ENCODE measurements at regions of chr3 and their contacts with region 1.

Region 1: GRCh38 chr3:18369551-18370185 is 55.5 kb downstream of the SATB1 start:
- DNase-seq: no peak
- ATAC-seq: no peak
- H3K4me3 ChIP-seq: no peak overlapping the region
- H3K4me3 Mint-ChIP-seq: peak overlapping the region; percentile 63
- H3K27ac ChIP-seq: no peak overlapping the region
- H3K27ac Mint-ChIP-seq: peak overlapping the region; percentile 93
- H3K4me1 ChIP-seq: peaks cover 15% of the 10 kb centered on the region
- H3K4me1 Mint-ChIP-seq: peaks cover 96% of the 10 kb centered on the region
- H3K27me3 ChIP-seq: no peaks in the 10 kb centered on the region
- H3K27me3 Mint-ChIP-seq: no peaks in the 10 kb centered on the region
- CTCF ChIP-seq: no peak

Region 2: GRCh38 chr3:18046131-18046915 is 323.3 kb before region 1 on chr3:
- CTCF ChIA-PET with region 1: no interaction called
- POLR2A ChIA-PET with region 1: no interaction called
- intact Hi-C with region 1: no loop called
- DNase-seq: no peak
- ATAC-seq: no peak
- H3K4me3 ChIP-seq: no peak overlapping the region
- H3K4me3 Mint-ChIP-seq: no peak overlapping the region
- H3K27ac ChIP-seq: no peak overlapping the region
- H3K27ac Mint-ChIP-seq: no peak overlapping the region
- H3K4me1 ChIP-seq: no peaks in the 10 kb centered on the region
- H3K4me1 Mint-ChIP-seq: no peaks in the 10 kb centered on the region
- H3K27me3 ChIP-seq: no peaks in the 10 kb centered on the region
- H3K27me3 Mint-ChIP-seq: peaks cover 5% of the 10 kb centered on the region
- CTCF ChIP-seq: no peak

Region 3: DNA sequence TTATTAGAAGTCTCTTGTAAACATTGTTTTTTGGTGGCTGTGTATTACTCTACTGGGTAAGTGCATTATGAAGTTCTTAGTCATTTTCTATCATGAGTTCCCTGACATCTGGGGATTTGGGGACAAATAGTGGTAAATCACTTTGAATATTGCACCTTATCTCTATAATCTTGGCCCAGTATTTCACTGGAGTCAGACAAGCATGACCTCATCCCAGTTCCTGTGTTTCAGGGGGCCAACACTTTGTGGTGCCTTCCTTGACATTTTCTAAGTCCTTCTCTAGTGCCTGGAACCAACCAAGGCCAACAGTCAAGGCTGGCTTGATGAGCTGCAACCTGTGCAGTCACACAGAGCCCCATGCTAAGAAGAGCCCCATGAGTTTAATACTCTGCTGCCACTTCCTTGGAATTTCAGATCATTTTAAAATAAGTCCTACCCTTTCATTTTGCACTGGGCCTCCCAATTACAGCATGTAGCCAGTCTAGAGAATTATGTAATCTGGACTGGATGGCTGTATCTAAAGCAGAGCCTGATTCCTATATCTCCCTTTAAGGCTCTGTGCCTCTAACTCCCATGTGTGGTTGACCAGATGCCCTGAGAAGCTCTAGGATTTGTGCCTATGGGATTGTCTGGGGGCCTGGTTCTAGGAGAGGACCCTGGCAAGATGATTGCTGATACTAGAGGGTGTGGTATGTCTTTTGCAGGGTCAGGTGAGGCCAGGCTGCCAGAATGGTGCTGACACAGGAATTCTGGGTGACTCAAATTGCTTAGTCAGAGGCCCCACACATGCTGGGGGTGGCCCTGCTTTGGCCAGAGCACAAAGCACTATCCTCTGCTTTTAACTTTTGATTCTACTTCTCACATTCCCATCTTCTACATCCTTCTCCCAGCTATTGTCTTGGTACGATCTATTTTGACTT is 307.7 kb before region 1 on chr3:
- CTCF ChIA-PET with region 1: no interaction called
- POLR2A ChIA-PET with region 1: no interaction called
- intact Hi-C with region 1: no loop called
- DNase-seq: no peak
- ATAC-seq: no peak
- H3K4me3 ChIP-seq: no peak overlapping the region
- H3K4me3 Mint-ChIP-seq: no peak overlapping the region
- H3K27ac ChIP-seq: no peak overlapping the region
- H3K27ac Mint-ChIP-seq: no peak overlapping the region
- H3K4me1 ChIP-seq: no peaks in the 10 kb centered on the region
- H3K4me1 Mint-ChIP-seq: no peaks in the 10 kb centered on the region
- H3K27me3 ChIP-seq: no peaks in the 10 kb centered on the region
- H3K27me3 Mint-ChIP-seq: no peaks in the 10 kb centered on the region
- CTCF ChIP-seq: no peak

Region 4: DNA sequence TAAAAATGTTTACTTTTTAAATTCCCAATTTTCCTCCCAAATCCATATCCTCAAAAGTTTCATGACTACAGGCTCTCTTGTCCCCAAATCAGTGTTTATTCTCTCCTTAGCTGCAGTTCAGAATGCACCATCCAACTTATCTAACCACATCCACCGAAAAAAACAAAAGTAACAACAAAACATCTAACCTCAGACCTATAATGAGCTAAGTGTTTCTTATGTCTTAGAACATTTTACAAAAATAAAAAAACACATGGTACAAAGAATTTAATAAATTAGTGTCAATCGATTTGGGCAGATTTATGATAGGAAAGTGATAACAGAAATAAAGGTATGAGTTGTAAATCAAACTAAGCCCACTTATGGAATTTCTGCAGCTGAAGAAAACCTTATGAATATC is 41.9 kb after region 1 on chr3:
- CTCF ChIA-PET with region 1: no interaction called
- POLR2A ChIA-PET with region 1: no interaction called
- intact Hi-C with region 1: loop called in 1 of 2 experiments (anchors 5 kb)
- DNase-seq: peak in 3 of 14 experiments; percentile 43 to 62 (median 46)
- ATAC-seq: peak; percentile 72
- H3K4me3 ChIP-seq: no peak overlapping the region
- H3K4me3 Mint-ChIP-seq: peak overlapping the region; percentile 79
- H3K27ac ChIP-seq: peak overlapping the region in 1 of 2 donors; percentile 53
- H3K27ac Mint-ChIP-seq: peak overlapping the region; percentile 82
- H3K4me1 ChIP-seq: peaks cover 17% of the 10 kb centered on the region
- H3K4me1 Mint-ChIP-seq: peaks cover 89% of the 10 kb centered on the region
- H3K27me3 ChIP-seq: no peaks in the 10 kb centered on the region
- H3K27me3 Mint-ChIP-seq: no peaks in the 10 kb centered on the region
- CTCF ChIP-seq: no peak